Right ventricle myocardium inferior (tissue), 1 donor: ENCODE measurements at regions of chr16 and their contacts with region 1.

Region 1: GRCh38 chr16:27109666-27110523 is 43.2 kb downstream of the C16orf82 start:
- DNase-seq: peak; percentile 87
- ATAC-seq: peak; percentile 95

Region 2: DNA sequence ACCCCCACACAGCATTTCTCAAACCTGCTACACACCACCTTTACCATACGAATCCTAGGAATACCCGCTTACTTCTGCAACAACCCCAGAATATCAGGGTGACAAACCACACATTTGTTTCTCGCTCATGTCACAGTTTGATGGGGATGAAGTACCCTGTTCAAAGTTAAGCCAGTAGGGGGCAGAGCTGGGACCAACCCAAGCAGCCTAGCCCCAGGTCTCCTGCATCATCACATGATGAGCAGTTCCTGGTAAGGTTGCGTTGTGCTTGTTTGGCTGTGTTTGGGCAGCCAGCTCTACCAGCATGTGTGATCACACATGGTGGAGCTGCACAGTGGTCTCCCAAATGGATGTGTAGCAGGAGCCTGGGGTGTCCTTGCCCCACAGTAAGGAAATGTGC is 146.8 kb before region 1 on chr16:
- intact Hi-C with region 1: loop called (anchors 10 kb)
- DNase-seq: no peak
- ATAC-seq: no peak